ENCODE measurements at regions of chr3 and their contacts with region 1.

Region 1: DNA sequence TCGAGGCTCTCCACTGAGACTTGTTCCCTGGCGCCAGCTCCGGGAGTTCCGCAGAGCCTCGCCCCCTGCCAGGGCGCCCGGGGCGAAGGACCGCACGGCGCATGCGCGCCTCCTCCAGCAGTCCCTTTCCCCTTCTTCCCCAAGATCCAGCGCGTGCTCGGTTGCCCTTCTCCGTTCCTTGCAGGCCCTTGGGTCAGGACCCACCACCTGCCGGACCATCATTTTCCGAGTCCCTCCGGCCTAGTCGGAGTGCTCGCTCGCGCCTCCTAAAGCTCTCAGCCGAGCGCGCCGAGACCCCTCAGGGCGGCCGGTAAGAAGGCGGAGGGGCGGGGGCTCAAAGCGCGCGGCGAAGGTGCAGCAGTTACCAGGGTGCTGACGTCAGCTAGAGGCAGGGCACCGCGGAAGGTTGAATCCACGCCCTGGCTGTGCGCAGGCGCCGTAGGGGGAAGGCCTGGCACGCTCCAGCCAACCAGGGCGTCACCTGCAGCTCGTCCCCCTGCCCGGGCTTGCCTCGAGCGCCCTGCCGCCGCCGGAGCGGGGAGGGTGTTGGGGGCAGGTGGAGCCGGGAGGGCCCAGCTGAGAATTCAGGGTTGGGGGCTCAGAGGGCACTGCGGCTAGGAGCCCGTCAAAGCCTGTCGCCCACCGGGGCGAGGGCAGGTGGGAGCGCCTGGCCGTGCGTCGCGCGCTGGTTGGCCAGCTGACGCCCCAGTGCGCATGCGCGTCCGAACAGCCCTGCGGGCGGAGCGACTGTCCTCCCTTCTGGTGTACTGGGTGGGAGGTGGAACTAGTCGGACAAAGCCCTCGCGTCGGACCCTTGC is at the start of gene TCAIM:
- DNase-seq: peak; percentile 98
- H3K4me3 ChIP-seq: peak within 1 kb of the TSS; percentile 73
- H3K4me3 Mint-ChIP-seq: peak within 1 kb of the TSS; percentile 85
- H3K27ac Mint-ChIP-seq: peak within 1 kb of the TSS; percentile 86
- H3K4me1 ChIP-seq: no peaks in the 10 kb centered on the region; the same call in 1 of the 2 replicates
- H3K4me1 Mint-ChIP-seq: peaks cover 7% of the 10 kb centered on the region
- H3K27me3 ChIP-seq: no peaks in the 10 kb centered on the region
- H3K27me3 Mint-ChIP-seq: no peaks in the 10 kb centered on the region
- CTCF ChIP-seq: no peak
- total RNA-seq, gene TCAIM: 14.7 and 15.0 TPM in 2 replicates

Region 2: DNA sequence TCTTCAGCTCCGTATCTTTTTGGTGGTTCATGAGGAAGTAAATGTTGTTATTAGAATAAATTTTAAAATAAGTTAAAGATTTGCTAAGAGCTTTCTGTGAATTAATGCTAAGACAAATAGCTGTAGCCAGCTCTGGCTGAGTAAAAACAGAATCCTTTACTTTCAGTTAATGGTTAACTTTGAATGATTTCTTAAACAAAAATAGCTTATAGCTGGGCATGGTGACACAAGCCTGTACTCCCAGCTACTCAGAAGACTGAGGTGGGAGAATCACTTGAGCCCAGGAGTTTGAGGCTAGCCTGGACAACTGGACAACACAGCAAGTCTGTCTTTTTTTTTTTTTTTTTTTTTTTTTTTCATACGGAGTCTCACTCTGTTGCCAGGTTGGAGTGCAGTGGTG is 25.4 kb after region 1 on chr3:
- CTCF ChIA-PET with region 1: interaction called, 3 read pairs
- POLR2A ChIA-PET with region 1: interaction called, 34 read pairs
- intact Hi-C with region 1: loop called (anchors 1 kb)
- DNase-seq: peak; percentile 42 to 63
- H3K4me3 ChIP-seq: no peak overlapping the region
- H3K4me3 Mint-ChIP-seq: no peak overlapping the region
- H3K27ac Mint-ChIP-seq: no peak overlapping the region
- H3K4me1 ChIP-seq: peaks cover 47% of the 10 kb centered on the region
- H3K4me1 Mint-ChIP-seq: peaks cover 13% of the 10 kb centered on the region
- H3K27me3 ChIP-seq: no peaks in the 10 kb centered on the region
- H3K27me3 Mint-ChIP-seq: no peaks in the 10 kb centered on the region
- CTCF ChIP-seq: no peak

Region 3: GRCh38 chr3:44387404-44387803 is 49.2 kb after region 1 on chr3:
- CTCF ChIA-PET with region 1: no interaction called
- POLR2A ChIA-PET with region 1: no interaction called
- intact Hi-C with region 1: no loop called
- DNase-seq: no peak
- H3K4me3 ChIP-seq: no peak overlapping the region
- H3K4me3 Mint-ChIP-seq: no peak overlapping the region
- H3K27ac Mint-ChIP-seq: no peak overlapping the region
- H3K4me1 ChIP-seq: no peaks in the 10 kb centered on the region
- H3K4me1 Mint-ChIP-seq: no peaks in the 10 kb centered on the region
- H3K27me3 ChIP-seq: no peaks in the 10 kb centered on the region
- H3K27me3 Mint-ChIP-seq: no peaks in the 10 kb centered on the region
- CTCF ChIP-seq: no peak

Region 4: DNA sequence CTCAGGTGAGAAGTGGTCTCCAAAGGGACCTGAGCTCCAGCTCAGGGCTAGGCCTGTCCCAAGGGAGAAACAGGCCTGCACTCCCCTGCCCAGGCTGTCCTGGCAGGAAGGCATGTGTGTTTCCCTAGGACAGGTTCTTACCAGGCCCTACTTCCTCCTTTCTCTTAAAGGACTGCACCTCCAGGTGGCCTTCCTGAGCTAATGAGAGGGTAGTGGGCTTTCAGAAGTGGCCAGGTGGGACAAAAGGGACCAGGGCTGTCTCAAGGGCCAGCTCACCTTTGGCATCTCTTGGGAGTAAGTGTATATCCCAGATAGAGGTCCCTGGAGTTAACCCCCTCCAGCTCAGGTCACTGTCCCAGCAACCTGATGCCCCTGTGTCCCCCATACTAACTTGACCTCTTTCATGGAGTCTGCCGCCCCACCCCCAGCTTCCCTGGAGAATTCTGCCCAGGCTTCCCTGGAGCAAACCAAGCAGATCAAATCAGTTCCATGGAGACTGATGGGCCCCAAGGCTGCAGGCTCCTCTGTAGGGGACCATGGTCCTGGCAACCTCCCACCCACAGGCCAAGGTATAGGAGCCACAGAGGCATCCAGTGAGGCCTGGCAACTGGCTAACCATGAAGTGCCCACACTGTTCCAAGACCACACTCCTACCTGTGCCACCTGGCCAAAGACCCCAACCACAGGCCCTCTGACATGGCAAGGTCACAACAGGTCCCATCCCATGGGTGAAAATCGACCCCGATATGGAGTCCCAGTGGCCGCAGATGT is 71.6 kb after region 1 on chr3:
- CTCF ChIA-PET with region 1: no interaction called
- POLR2A ChIA-PET with region 1: no interaction called
- intact Hi-C with region 1: loop called (anchors 10 kb)
- DNase-seq: no peak
- H3K4me3 ChIP-seq: no peak overlapping the region
- H3K4me3 Mint-ChIP-seq: no peak overlapping the region
- H3K27ac Mint-ChIP-seq: no peak overlapping the region
- H3K4me1 ChIP-seq: no peaks in the 10 kb centered on the region
- H3K4me1 Mint-ChIP-seq: no peaks in the 10 kb centered on the region
- H3K27me3 ChIP-seq: no peaks in the 10 kb centered on the region
- H3K27me3 Mint-ChIP-seq: no peaks in the 10 kb centered on the region
- CTCF ChIP-seq: no peak